Adrenal gland (tissue), 19 donors: ENCODE measurements at regions of chr11 and their contacts with region 1.

Region 1: DNA sequence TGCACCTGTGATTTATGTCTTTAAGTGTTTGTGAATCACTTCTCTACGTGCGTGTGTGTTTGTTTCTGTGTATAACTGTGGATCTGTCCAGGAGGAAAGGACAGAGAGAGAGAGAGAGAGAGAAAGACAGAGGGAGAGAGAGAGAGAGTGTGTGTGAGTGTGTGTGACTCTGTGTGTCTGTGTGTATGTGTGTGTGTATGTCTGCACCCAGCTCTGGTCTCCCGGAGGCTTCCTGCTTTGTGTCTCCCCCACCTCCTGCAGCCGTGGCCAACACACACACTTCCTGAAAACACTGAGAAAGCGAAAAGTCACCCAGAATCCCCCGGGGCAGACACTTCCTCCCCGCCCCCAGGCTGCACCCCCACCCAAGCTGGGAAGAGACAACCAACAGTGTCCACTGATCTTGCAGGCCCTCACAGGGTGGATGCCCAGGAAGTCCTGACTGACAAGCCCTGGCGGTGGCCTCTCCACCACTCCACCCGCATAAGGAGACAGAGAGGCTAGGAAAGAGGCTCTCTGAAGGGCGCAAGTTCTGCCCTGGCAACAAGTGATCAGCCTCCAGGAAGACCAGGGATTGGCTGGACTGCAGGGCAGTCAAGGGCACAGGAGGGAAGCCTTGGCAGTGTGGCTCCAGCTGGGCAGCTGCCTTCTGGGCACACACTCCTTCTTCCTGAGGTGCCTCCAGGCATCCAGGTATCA is 30.0 kb downstream of the ARAP1 start:
- DNase-seq: peak; percentile 88 to 96 (median 92)
- H3K4me3 ChIP-seq: peak overlapping the region in 3 of 4 donors; percentile 38 to 67 (median 41)
- H3K27ac ChIP-seq: peak overlapping the region; percentile 34 to 90 (median 77)
- H3K4me1 ChIP-seq: peaks cover 41 to 56% of the 10 kb centered on the region in 2 donors
- H3K27me3 ChIP-seq: no peaks in the 10 kb centered on the region
- CTCF ChIP-seq: peak in 1 of 6 experiments; percentile 13
- POLR2A ChIP-seq: peak in 1 of 2 donors; percentile 68

Region 2: GRCh38 chr11:72781313-72782050 is 59.3 kb after region 1 on chr11:
- intact Hi-C with region 1: loop called (anchors 5 kb)
- DNase-seq: peak in 1 of 7 donors; percentile 56
- H3K4me3 ChIP-seq: peak overlapping the region in 3 of 4 donors; percentile 41 to 86 (median 77)
- H3K27ac ChIP-seq: peak overlapping the region; percentile 33 to 92 (median 88)
- H3K4me1 ChIP-seq: peaks cover 37 to 55% of the 10 kb centered on the region in 2 donors
- H3K27me3 ChIP-seq: no peaks in the 10 kb centered on the region
- CTCF ChIP-seq: no peak
- POLR2A ChIP-seq: no peak

Region 3: GRCh38 chr11:72787216-72788104 is 65.3 kb after region 1 on chr11:
- intact Hi-C with region 1: loop called (anchors 5 kb)
- DNase-seq: no peak
- H3K4me3 ChIP-seq: no peak overlapping the region
- H3K27ac ChIP-seq: no peak overlapping the region
- H3K4me1 ChIP-seq: peaks cover 0 to 3% of the 10 kb centered on the region in 2 donors
- H3K27me3 ChIP-seq: no peaks in the 10 kb centered on the region
- CTCF ChIP-seq: no peak
- POLR2A ChIP-seq: no peak

Region 4: GRCh38 chr11:72814286-72815109 is 92.3 kb after region 1 on chr11 and contains the start of gene ATG16L2:
- intact Hi-C with region 1: loop called in 1 of 2 experiments (anchors 10 kb)
- DNase-seq: peak; percentile 83 to 90 (median 87)
- H3K4me3 ChIP-seq: peak within 1 kb of the TSS; percentile 46 to 92 (median 56)
- H3K27ac ChIP-seq: peak within 1 kb of the TSS; percentile 85 to 98 (median 94)
- H3K4me1 ChIP-seq: peaks cover 20 to 39% of the 10 kb centered on the region in 2 donors
- H3K27me3 ChIP-seq: no peaks in the 10 kb centered on the region
- CTCF ChIP-seq: peak in 5 of 6 experiments; percentile 20 to 68 (median 27)
- POLR2A ChIP-seq: peak; percentile 69 to 78
- total RNA-seq, gene ATG16L2: 9.2 to 70.0 (median 29.9) TPM

Region 5: GRCh38 chr11:72897506-72897905 is 175.3 kb after region 1 on chr11:
- intact Hi-C with region 1: no loop called
- DNase-seq: no peak
- H3K4me3 ChIP-seq: no peak overlapping the region
- H3K27ac ChIP-seq: no peak overlapping the region
- H3K4me1 ChIP-seq: no peaks in the 10 kb centered on the region
- H3K27me3 ChIP-seq: no peaks in the 10 kb centered on the region
- CTCF ChIP-seq: no peak
- POLR2A ChIP-seq: no peak